Activated naive CD4-positive, alpha-beta T cell treated with anti-CD3 and anti-CD28 coated beads for 36 hours (primary cell): ENCODE measurements at regions of chr2 and their contacts with region 1.

Region 1: GRCh38 chr2:15577071-15577735 is 14.5 kb upstream of the DDX1 start:
- DNase-seq: peak; percentile 97
- H3K4me3 Mint-ChIP-seq: no peak overlapping the region
- H3K27ac Mint-ChIP-seq: no peak overlapping the region
- H3K4me1 Mint-ChIP-seq: no peaks in the 10 kb centered on the region
- H3K27me3 Mint-ChIP-seq: no peaks in the 10 kb centered on the region

Region 2: DNA sequence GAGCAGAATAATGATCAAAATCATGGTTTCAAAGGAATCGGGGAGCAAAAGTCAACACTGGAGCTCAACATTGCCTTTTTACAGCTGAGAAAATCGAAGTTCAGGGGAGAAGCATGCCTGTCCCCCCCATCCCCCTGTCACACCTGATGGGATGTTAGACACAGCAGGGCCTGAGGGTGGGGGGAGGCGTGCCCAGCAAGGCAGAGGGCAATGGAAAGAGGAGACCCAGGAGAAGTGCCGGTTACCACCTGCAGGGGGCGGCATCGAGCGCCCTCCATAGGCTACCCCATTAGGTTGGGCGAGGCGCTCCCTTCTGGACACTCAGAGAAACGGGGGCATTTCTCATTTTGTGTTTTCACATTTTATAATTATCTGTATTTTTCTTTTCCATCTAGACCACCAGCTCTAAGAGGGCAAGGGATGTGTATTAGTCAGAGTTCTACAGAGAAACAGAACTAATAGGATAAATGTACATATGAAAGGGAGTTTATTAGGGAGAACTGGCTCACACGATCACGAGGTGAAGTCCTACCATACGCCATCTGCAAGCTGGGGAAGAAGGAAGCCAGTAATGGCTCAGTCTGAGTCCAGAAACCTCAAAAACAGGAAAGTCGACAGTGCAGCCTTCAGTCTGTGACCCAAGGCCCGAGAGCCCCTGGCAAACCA is 673.4 kb before region 1 on chr2:
- CTCF ChIA-PET with region 1: interaction called, 5 read pairs
- intact Hi-C with region 1: loop called (anchors 1 kb)
- DNase-seq: peak; percentile 72
- H3K4me3 Mint-ChIP-seq: no peak overlapping the region
- H3K27ac Mint-ChIP-seq: no peak overlapping the region
- H3K4me1 Mint-ChIP-seq: no peaks in the 10 kb centered on the region
- H3K27me3 Mint-ChIP-seq: peaks cover 6% of the 10 kb centered on the region

Region 3: DNA sequence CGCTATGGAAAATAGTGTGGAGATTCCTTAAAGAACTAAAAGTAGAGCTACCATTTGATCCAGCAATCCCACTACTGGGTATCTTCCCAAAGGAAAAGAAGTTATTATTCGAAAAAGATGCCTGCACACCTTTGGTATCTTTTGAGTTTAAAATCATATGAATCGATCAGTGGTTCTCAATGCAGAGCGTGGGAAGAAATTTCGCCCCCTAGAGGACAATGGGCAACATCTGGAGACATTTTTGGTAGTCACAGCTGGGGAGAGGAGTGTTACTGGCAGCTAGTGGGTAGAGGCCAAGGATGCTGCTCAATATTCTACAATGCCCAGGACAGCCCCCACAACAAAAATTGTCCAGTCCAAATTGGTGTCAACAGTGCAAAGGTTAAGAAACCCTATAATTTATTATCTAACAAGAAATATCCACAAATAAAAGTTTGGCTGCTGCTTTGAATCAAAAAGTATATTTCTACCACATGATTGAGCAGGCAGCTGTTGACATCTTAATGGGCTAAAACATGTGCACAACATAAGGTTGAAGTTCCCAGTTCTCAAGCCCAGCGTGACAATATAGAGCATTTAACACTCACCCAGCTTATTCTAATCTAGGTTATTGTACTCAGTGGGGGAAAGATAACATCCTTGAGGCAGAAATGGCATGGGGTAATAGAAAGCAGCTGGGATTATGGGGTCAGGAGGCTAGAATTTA is 519.0 kb before region 1 on chr2:
- CTCF ChIA-PET with region 1: no interaction called
- intact Hi-C with region 1: loop called (anchors 5 kb)
- DNase-seq: peak; percentile 46
- H3K4me3 Mint-ChIP-seq: no peak overlapping the region
- H3K27ac Mint-ChIP-seq: no peak overlapping the region
- H3K4me1 Mint-ChIP-seq: no peaks in the 10 kb centered on the region
- H3K27me3 Mint-ChIP-seq: peaks cover 18% of the 10 kb centered on the region

Region 4: DNA sequence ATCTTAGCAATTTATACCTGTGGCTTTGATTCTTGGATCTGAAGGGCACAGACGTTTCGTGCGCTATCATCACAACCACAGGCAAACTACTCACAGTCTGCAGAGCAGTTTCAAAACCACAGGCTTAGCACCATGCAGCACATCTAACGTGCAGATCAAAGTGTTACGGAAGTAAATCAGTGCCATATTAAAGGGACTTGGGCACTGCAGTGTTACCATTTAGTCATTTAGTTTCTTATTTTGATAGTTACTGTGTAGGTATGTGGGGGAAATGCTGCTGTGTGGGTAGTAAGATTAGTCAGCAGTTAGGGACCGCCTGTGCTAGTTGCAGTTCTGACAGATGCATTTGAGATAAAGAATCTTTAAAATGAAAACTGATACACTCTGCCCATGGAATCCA is 400.1 kb before region 1 on chr2:
- CTCF ChIA-PET with region 1: no interaction called
- intact Hi-C with region 1: loop called (anchors 5 kb)
- DNase-seq: peak; percentile 85
- H3K4me3 Mint-ChIP-seq: no peak overlapping the region
- H3K27ac Mint-ChIP-seq: no peak overlapping the region
- H3K4me1 Mint-ChIP-seq: peaks cover 51% of the 10 kb centered on the region
- H3K27me3 Mint-ChIP-seq: peaks cover 19% of the 10 kb centered on the region

Region 5: DNA sequence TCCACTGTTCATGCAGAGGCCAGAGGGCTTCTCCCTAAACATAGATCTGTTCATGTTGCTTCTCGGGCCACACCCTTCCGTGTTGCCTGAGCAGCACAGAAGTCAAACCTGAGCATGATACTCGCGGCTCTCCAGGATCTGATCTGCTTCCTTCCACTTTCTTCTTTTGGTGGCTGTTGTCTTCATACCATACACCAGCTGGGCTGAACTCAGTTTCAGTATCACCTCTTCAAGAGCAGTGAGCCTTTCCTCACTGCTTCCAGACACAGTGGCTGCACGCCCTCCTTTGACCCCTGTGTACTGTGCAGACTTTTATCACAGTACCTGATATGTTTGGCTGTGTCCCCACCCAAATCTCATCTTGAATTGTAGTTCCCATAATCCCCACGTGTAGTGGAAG is 365.0 kb before region 1 on chr2:
- CTCF ChIA-PET with region 1: no interaction called
- intact Hi-C with region 1: no loop called
- DNase-seq: no peak
- H3K4me3 Mint-ChIP-seq: no peak overlapping the region
- H3K27ac Mint-ChIP-seq: no peak overlapping the region
- H3K4me1 Mint-ChIP-seq: peaks cover 7% of the 10 kb centered on the region
- H3K27me3 Mint-ChIP-seq: no peaks in the 10 kb centered on the region

Region 6: DNA sequence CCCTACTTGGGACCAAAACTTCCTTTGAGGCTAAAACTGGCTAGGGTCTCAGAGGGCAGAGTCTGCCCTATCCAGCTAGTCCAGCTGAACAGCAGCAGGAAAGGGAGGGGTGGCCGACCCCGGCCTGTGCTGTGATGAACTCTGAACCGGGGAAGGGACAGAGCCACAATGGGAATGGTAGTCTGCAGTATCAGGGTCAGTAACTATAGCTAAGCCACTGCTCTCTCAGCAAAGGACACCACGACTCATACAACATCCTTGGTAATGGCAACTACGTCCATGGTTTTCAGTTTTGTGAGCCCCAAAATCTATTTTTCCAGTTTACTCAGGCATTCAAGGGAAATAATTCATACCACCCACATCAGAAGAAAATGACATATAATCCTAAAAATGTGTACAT is 91.3 kb before region 1 on chr2:
- CTCF ChIA-PET with region 1: no interaction called
- intact Hi-C with region 1: no loop called
- DNase-seq: no peak
- H3K4me3 Mint-ChIP-seq: no peak overlapping the region
- H3K27ac Mint-ChIP-seq: no peak overlapping the region
- H3K4me1 Mint-ChIP-seq: no peaks in the 10 kb centered on the region
- H3K27me3 Mint-ChIP-seq: no peaks in the 10 kb centered on the region

Region 7: DNA sequence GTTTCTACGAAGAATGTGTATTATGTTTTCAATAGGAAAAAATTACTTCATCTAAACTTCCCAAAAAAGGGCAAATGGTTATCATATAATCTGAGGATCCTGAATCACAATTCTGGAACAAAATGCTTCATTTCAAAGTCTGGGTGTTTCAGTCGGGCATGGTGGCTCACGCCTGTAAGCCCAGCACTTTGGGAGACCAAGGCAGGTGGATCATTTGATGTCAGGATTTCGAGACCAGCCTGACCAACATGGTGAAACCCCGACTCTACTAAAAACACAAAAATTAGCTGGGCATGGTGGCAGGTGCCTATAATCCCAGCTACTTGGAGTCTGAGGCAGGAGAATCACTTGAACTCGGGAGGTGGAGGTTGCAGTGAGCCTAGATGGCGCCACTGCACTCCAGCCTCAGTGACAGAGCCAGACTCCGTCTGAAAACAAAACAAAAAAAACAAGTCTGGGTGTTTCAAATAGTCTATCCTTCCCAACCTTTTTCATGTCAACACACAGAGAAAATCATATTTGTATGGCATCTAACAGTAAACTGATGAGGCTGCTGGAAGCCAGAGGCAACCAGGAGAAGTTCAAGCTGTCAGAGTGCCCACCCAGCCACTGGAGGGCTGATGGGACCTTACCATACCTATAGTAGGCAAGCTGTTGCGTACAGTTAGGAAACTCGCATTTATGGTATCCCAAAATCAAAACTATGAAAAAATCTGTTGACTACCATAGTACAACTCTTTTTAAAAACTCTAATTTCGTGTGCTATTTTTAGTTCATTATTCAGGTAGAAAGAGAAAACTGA is 30.7 kb before region 1 on chr2:
- CTCF ChIA-PET with region 1: interaction called, 19 read pairs
- intact Hi-C with region 1: no loop called
- DNase-seq: peak; percentile 14
- H3K4me3 Mint-ChIP-seq: no peak overlapping the region
- H3K27ac Mint-ChIP-seq: no peak overlapping the region
- H3K4me1 Mint-ChIP-seq: peaks cover 2% of the 10 kb centered on the region
- H3K27me3 Mint-ChIP-seq: no peaks in the 10 kb centered on the region

Region 8: DNA sequence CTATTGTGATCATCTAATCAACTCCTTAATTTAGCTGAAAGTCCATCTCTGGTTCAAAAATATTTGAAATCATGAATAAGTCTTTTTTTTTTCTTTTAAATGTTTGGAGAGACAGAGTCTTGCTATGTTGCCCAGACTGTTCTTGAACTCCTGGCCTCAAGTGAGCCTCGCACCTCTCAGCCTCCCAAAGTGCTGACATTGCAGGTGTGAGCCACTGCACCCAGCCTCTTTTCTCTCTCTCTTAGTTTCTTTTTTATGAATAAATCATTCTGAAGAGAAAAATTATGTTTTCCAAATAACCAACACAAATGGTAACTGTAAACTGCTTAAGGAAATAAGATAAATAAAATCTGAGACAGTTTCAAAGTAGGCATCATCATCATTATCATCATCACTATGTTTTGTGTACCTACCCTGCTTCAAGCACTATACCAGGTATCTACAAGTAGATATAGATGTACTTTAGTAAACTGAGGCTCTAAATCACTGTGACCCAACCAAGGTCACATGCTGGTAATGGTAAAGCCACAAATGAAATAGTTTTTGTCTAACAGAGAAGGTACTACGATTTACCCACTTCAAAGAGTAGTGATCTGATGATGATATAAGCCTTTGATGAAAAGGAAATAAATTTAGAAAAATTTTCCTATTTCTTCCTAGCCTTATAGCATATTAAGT is 11.1 kb before region 1 on chr2:
- CTCF ChIA-PET with region 1: interaction called, 21 read pairs
- intact Hi-C with region 1: loop called (anchors 1 kb)
- DNase-seq: no peak
- H3K4me3 Mint-ChIP-seq: no peak overlapping the region
- H3K27ac Mint-ChIP-seq: no peak overlapping the region
- H3K4me1 Mint-ChIP-seq: peaks cover 11% of the 10 kb centered on the region
- H3K27me3 Mint-ChIP-seq: no peaks in the 10 kb centered on the region

Region 9: DNA sequence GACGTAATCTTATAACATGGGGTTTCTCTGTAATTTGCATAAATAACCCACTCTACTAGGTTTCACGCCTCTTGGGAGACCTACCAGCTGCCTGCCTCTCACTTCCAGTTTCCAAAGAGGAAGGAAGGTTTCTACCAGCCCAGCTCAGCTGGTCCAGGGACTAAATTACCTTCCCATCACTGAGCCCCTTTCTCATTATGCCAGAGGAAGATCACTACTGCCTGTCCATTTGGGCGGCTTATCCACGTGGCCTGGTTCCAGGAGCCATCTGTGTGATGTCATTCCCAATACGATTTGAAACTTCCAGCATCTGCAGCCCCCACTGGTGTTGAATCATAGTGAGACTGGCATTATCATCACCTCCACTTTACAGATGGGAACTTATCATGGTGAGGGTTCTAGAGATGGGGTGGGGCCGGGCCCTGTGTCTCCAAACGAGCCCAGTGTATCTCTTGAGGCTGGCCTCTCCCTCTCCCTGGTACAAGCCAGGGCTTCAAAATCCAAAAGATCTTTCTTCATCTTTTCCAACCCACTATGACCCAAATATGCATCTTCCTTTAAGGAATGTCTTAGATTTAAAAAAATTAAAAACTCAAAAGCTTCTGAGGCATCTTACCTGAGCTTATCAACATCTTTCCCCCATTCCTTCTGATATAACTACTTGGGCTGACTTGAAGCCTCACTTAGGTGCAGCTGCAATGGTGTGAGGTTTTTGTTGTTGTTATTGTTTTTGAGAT is 155.3 kb after region 1 on chr2:
- CTCF ChIA-PET with region 1: no interaction called
- intact Hi-C with region 1: no loop called
- DNase-seq: no peak
- H3K4me3 Mint-ChIP-seq: no peak overlapping the region
- H3K27ac Mint-ChIP-seq: no peak overlapping the region
- H3K4me1 Mint-ChIP-seq: no peaks in the 10 kb centered on the region
- H3K27me3 Mint-ChIP-seq: peaks cover 3% of the 10 kb centered on the region

Region 10: DNA sequence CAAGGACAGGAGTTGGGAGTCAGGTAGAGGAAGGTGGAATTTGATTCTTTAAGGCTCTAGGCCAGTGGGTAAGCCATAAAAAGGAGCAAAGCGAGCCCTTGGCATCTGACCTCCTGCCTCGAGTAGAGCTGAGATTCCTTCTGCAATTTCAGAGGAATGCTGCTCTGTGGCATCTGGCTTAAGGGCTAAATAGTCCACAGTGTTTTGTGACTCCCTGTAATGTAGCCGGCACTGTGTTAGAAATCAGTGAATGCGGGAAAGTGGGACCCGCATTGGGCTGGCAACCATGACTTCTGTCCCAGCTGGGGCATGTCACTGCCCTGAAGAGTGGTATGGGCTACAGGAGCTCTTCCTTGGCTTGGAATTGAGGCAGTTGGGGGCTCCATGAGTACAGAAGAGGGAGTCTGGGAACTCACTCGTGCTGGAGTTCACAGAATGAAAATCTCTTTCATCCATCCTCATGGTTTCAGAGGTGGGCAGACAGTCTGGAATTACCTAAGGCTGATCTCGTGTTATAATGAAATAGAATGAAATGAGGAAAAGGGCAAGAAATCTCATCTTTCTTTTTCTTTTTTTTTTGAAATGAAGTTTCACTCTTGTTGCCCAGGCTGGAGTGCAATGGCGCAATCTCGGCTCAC is 350.5 kb after region 1 on chr2:
- CTCF ChIA-PET with region 1: no interaction called
- intact Hi-C with region 1: no loop called
- DNase-seq: no peak
- H3K4me3 Mint-ChIP-seq: no peak overlapping the region
- H3K27ac Mint-ChIP-seq: no peak overlapping the region
- H3K4me1 Mint-ChIP-seq: no peaks in the 10 kb centered on the region
- H3K27me3 Mint-ChIP-seq: peaks cover 7% of the 10 kb centered on the region